ENCODE measurements at regions of chr16 and their contacts with region 1.

Region 1: GRCh38 chr16:89700100-89700648 is 1.3 kb downstream of the SPATA2L start:
- DNase-seq: peak; percentile 99 to 100 (median 99)
- H3K4me3 ChIP-seq: peak overlapping the region in 2 of 3 donors; percentile 68 to 80
- H3K27ac ChIP-seq: peak overlapping the region; percentile 95 to 97
- H3K4me1 ChIP-seq: peaks cover 0 to 14% (median 5%) of the 10 kb centered on the region in 3 donors
- H3K27me3 ChIP-seq: no peaks in the 10 kb centered on the region
- CTCF ChIP-seq: peak; percentile 78

Region 2: DNA sequence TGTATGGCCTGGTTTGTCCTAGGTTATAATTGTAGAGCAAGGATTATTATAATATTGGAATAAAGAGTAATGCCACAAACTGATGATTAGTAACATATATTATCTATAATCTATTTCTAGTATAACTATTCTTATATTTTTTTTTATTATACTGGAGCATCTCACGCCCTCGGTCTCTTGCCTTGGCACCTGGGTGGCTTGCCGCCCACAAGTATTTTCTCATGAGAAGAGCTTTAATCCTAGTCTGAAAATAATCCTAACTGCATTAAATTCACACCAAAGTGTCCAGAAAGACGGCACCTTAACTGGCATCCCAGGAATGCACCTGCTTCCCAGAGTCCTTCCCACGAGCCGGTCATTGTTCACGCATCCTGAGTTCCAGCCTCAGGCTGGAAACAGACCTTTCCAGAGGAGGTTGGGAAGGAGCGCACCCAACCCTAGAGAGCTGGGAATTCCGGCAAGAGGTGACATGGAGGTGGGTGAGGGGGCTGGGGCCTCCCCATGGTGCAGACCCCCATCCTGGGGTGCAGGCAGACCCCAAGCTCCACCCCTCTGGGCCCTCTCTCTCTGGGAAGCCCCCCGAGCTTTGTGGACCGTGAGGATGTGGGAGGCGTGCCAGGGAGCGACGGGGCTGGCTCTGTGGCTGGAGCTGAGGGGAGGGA is 58.6 kb before region 1 on chr16:
- intact Hi-C with region 1: no loop called
- DNase-seq: peak in 4 of 5 donors; percentile 52 to 71 (median 66)
- H3K4me3 ChIP-seq: no peak overlapping the region
- H3K27ac ChIP-seq: no peak overlapping the region
- H3K4me1 ChIP-seq: peaks cover 0 to 4% (median 0%) of the 10 kb centered on the region in 3 donors
- H3K27me3 ChIP-seq: no peaks in the 10 kb centered on the region
- CTCF ChIP-seq: no peak

Region 3: DNA sequence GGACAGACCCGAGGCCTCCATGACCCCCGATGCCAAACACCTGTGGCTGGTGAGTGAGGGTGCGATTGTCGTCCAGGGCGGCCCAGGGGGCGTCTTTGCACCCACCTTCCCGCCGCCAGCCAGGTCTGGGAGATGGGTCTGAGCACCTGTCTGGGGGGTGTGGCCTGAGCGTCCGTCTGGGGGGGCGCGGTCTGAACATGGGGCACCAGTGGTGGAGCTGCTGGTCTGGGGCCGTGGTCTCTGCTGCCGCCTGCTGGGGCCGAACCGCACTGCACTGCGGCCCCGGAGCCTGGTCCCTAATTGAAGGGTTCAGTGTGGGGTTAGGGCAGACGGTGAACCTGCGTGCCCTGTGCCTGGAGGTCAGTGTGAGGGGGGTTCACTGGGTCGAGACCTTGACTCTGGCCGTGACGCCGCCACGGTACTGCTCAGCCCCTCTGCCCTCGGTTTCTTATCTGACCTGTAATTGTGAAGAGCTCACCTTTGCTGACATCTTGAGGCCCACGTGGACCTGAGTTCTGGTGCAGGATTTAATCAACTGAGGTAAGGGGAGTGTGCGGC is 160.7 kb after region 1 on chr16:
- intact Hi-C with region 1: loop called (anchors 10 kb)
- DNase-seq: peak; percentile 55 to 89 (median 68)
- H3K4me3 ChIP-seq: no peak overlapping the region
- H3K27ac ChIP-seq: no peak overlapping the region
- H3K4me1 ChIP-seq: peaks cover 0 to 4% (median 4%) of the 10 kb centered on the region in 3 donors
- H3K27me3 ChIP-seq: no peaks in the 10 kb centered on the region
- CTCF ChIP-seq: peak; percentile 98

Measured in kidney (tissue), 22 donors.